PC-3 (cell line): ENCODE measurements at regions of chr3 and their contacts with region 1.

Region 1: GRCh38 chr3:164533275-164533674 is 545.0 kb downstream of the SI start:
- DNase-seq: peak; percentile 73
- ATAC-seq: peak; percentile 96
- H3K4me3 ChIP-seq: no peak overlapping the region
- H3K27ac ChIP-seq: no peak overlapping the region
- H3K4me1 ChIP-seq: peaks cover 25% of the 10 kb centered on the region; the same call in 1 of the 2 replicates
- H3K27me3 ChIP-seq: no peaks in the 10 kb centered on the region
- CTCF ChIP-seq: no peak

Region 2: DNA sequence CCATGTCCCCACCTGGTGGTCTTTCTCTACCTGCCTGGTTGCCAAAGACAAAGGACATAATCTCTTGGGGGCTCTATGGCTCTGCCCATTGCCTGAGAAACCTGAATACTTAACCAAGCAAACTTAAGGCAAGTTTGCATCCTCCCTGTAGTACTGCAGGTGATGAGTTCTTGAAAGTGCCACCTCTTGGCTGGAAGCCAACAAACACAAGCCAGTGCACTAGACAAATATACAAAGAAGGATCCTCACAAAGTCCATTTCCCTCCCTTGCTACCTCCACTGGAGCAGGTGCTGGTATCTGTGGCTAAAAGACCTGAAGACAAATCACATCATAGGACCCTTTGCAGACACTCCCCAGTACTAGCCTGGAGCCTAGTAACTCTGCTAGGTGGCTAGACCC is 227.2 kb before region 1 on chr3:
- CTCF ChIA-PET with region 1: no interaction called
- POLR2A ChIA-PET with region 1: no interaction called
- intact Hi-C with region 1: loop called (anchors 10 kb)
- DNase-seq: no peak
- ATAC-seq: no peak
- H3K4me3 ChIP-seq: no peak overlapping the region
- H3K27ac ChIP-seq: no peak overlapping the region
- H3K4me1 ChIP-seq: no peaks in the 10 kb centered on the region
- H3K27me3 ChIP-seq: no peaks in the 10 kb centered on the region
- CTCF ChIP-seq: no peak

Region 3: GRCh38 chr3:164479978-164480377 is 53.3 kb before region 1 on chr3:
- CTCF ChIA-PET with region 1: no interaction called
- POLR2A ChIA-PET with region 1: no interaction called
- intact Hi-C with region 1: loop called (anchors 1 kb)
- DNase-seq: peak; percentile 19
- ATAC-seq: peak; percentile 96
- H3K4me3 ChIP-seq: no peak overlapping the region
- H3K27ac ChIP-seq: no peak overlapping the region
- H3K4me1 ChIP-seq: no peaks in the 10 kb centered on the region; the same call in 1 of the 2 replicates
- H3K27me3 ChIP-seq: no peaks in the 10 kb centered on the region
- CTCF ChIP-seq: no peak